ENCODE measurements at regions of chr5 and their contacts with region 1.

Region 1: GRCh38 chr5:19608444-19609002 is 379.5 kb downstream of the CDH18 start:
- DNase-seq: peak; percentile 29
- H3K4me3 ChIP-seq: no peak overlapping the region
- H3K27ac ChIP-seq: no peak overlapping the region
- H3K4me1 ChIP-seq: no peaks in the 10 kb centered on the region
- CTCF ChIP-seq: peak; percentile 77

Region 2: DNA sequence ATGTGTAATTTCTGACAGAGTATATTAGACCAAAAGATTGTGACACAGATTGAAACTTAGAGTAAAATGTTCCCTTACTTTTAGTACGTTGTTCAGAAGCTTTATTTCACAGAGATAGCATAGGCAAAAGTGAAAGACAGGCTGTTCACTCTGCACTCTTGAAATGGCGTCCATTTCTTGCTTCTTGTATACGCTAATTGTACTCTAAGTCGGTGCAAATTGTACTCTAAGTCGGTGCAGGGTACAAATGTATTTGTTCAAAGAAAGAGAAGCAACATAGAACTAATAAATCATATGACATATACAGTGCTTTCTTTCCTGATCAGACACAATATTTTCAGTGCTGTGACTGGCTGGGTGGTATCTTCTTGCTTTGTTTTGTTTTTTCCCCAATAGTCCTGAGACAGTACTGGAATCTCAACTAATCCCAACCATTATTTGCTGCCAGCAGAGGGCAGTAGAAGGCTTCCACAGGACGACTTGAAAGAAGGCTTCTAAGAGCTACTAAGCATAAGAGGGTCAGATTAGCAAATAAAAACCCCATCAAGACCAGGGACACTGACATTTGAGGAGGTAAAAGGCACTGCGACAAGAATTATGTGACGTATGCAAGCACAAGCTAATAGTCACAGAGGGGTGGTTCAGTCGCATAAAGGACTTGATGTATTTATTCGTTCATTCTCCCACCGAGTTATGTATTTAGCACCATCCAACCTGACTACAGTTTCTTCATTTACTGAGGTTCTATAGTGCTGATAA is 1142.5 kb before region 1 on chr5:
- CTCF ChIA-PET with region 1: interaction called, 3 read pairs
- POLR2A ChIA-PET with region 1: no interaction called
- intact Hi-C with region 1: loop called (anchors 2 kb)
- DNase-seq: peak; percentile 63
- H3K4me3 ChIP-seq: no peak overlapping the region
- H3K27ac ChIP-seq: no peak overlapping the region
- H3K4me1 ChIP-seq: no peaks in the 10 kb centered on the region
- CTCF ChIP-seq: peak; percentile 90

Region 3: GRCh38 chr5:18699681-18700080 is 908.8 kb before region 1 on chr5:
- CTCF ChIA-PET with region 1: interaction called, 3 read pairs
- POLR2A ChIA-PET with region 1: no interaction called
- intact Hi-C with region 1: loop called (anchors 2 kb)
- DNase-seq: no peak
- H3K4me3 ChIP-seq: no peak overlapping the region
- H3K27ac ChIP-seq: no peak overlapping the region
- H3K4me1 ChIP-seq: peaks cover 13% of the 10 kb centered on the region
- CTCF ChIP-seq: no peak

Region 4: GRCh38 chr5:19270153-19270818 is 338.2 kb before region 1 on chr5:
- CTCF ChIA-PET with region 1: no interaction called
- POLR2A ChIA-PET with region 1: no interaction called
- intact Hi-C with region 1: loop called (anchors 5 kb)
- DNase-seq: peak; percentile 99
- H3K4me3 ChIP-seq: peak overlapping the region; percentile 34
- H3K27ac ChIP-seq: peak overlapping the region; percentile 100
- H3K4me1 ChIP-seq: peaks cover 81% of the 10 kb centered on the region
- CTCF ChIP-seq: no peak

Measured in OCI-LY7 (cell line).